Natural killer cell (primary cell): ENCODE measurements at regions of chr11 and their contacts with region 1.

Region 1: DNA sequence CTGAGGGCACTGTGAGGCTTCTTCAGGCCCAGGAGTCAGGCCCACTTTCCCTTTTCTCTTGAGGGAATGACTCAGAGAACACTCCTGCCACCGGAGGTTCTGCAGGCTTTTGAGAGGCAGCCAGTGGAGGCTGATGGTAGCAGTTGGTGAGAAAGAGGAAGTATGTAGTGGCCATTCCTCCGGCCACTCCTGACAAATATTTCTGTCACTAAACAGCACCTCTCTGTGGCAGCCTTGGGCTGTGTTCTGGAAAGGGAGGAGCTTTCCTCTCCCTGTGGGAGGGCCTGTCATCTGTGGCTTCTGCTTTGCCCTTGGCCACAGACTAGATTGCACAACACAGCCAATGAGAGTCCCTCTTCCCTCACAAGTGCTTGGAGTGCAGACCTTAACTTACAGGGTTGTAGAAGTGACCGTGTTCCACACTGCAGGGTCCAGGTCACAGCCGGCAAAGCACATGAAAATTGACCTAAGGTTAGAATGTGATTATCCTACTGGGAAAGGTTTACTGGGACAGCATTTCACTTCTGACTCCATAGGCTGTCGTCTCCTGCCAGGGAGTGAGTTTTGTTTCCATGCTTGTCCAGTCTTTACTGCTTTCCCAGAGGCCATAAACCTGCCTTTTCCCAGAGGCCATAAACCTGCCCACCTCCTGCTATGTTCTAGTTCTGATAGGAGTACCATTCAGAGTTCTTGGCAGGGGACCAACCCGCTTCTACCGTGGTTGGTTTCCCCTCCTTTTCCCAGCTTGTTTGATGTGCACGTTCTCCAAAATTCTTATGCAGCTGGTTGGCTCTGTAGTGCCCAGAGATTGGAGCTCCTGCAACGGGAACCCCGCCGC is 33.3 kb downstream of the MARK2 start:
- DNase-seq: peak; percentile 47 to 65
- ATAC-seq: peak; percentile 92 to 96 (median 93)
- H3K4me3 ChIP-seq: no peak overlapping the region
- H3K4me3 Mint-ChIP-seq: peak overlapping the region; percentile 71
- H3K27ac ChIP-seq: peak overlapping the region; percentile 16
- H3K27ac Mint-ChIP-seq: peak overlapping the region; percentile 62 to 76
- H3K4me1 ChIP-seq: peaks cover 85% of the 10 kb centered on the region
- H3K4me1 Mint-ChIP-seq: peaks cover 74 to 78% of the 10 kb centered on the region in 2 donors
- H3K27me3 ChIP-seq: no peaks in the 10 kb centered on the region
- H3K27me3 Mint-ChIP-seq: no peaks in the 10 kb centered on the region
- CTCF ChIP-seq: peak; percentile 27

Region 2: GRCh38 chr11:63888170-63889086 is 16.2 kb after region 1 on chr11:
- intact Hi-C with region 1: loop called (anchors 2 kb)
- DNase-seq: peak; percentile 55 to 86
- ATAC-seq: peak; percentile 77 to 86 (median 82)
- H3K4me3 ChIP-seq: peak overlapping the region; percentile 70
- H3K4me3 Mint-ChIP-seq: peak overlapping the region; percentile 93
- H3K27ac ChIP-seq: peak overlapping the region; percentile 90
- H3K27ac Mint-ChIP-seq: peak overlapping the region; percentile 94
- H3K4me1 ChIP-seq: peaks cover 73% of the 10 kb centered on the region
- H3K4me1 Mint-ChIP-seq: peaks cover 70 to 75% of the 10 kb centered on the region in 2 donors
- H3K27me3 ChIP-seq: no peaks in the 10 kb centered on the region
- H3K27me3 Mint-ChIP-seq: no peaks in the 10 kb centered on the region
- CTCF ChIP-seq: no peak

Region 3: DNA sequence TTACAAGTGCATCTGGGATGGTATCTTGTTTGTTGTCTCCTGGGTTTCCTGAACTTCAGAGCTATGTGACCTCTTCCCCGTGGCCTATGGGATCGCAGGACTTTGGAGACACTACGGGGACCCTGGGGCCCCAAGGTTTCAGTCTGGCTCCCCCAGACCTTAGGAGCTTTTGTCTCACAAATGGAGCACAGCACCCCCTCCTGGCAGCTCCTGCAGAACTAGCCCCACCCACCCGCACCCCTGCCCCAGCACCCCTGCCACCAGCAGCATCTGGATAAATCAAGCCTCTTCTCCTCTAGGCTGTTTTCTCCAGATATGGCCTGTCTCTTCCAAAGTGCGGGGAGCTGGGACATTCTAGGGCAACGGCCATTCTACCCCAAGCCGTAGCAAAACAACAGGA is 34.4 kb after region 1 on chr11:
- intact Hi-C with region 1: no loop called
- DNase-seq: peak; percentile 34 to 78
- ATAC-seq: peak in 2 of 3 donors; percentile 49 to 56
- H3K4me3 ChIP-seq: no peak overlapping the region
- H3K4me3 Mint-ChIP-seq: no peak overlapping the region
- H3K27ac ChIP-seq: no peak overlapping the region
- H3K27ac Mint-ChIP-seq: peak overlapping the region in 1 of 2 donors; percentile 20
- H3K4me1 ChIP-seq: no peaks in the 10 kb centered on the region
- H3K4me1 Mint-ChIP-seq: peaks cover 4 to 14% of the 10 kb centered on the region in 2 donors
- H3K27me3 ChIP-seq: no peaks in the 10 kb centered on the region
- H3K27me3 Mint-ChIP-seq: no peaks in the 10 kb centered on the region
- CTCF ChIP-seq: peak; percentile 28

Region 4: DNA sequence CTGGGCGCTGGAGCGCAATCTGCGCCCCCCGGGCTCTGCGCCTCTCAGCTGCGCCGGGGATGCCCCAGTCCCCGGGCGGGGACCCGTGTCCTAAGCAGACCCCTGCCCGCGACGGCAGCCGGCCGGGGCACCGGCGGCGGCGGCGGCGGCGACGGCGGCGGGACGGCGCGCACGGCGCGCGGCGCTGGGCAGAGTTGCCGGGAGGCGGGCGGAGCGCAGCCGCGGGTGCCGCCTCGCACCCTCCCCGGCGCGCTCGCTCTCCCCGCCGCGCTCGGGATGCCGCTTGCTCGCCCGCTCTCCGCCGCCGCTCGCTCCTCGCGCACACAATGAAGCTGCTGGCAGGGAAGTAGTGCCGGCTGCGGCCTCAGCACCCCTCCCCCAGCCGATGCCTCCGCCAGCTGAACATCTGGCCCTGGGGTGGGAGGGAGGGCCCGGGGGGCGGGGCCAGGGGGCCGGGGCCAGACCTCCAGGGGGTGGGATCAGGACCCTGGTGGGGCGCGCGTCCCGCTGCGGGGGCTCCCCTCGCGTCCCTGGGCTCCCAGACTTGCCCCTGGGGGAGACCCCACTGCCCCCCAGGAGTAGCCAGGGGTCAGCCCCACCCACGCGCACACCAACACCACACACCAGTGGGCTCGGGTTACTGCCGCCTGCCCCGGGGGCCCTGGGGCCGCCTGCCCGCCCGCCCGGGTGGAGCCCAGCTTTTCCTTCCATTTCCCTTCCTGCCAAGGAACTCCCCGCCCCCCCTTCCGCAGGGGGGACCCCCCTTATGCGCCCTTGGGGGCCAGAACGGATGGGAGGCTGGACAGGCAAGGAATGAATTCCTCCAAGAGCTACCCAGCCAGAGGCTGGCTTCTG is 44.9 kb after region 1 on chr11 and contains the start of gene RCOR2:
- intact Hi-C with region 1: loop called (anchors 5 kb)
- DNase-seq: peak; percentile 45 to 78
- ATAC-seq: peak; percentile 60 to 73 (median 71)
- H3K4me3 ChIP-seq: peak within 1 kb of the TSS; percentile 39
- H3K4me3 Mint-ChIP-seq: peak within 1 kb of the TSS; percentile 91
- H3K27ac ChIP-seq: no peak within 1 kb of the TSS
- H3K27ac Mint-ChIP-seq: peak within 1 kb of the TSS in 1 of 2 donors; percentile 58
- H3K4me1 ChIP-seq: peaks cover 38% of the 10 kb centered on the region
- H3K4me1 Mint-ChIP-seq: peaks cover 0 to 32% of the 10 kb centered on the region in 2 donors
- H3K27me3 ChIP-seq: peaks cover 7% of the 10 kb centered on the region
- H3K27me3 Mint-ChIP-seq: peaks cover 0 to 5% of the 10 kb centered on the region in 2 donors
- CTCF ChIP-seq: no peak
- total RNA-seq, gene RCOR2: not detected